Activated CD4-positive, alpha-beta T cell treated with anti-CD3 and anti-CD28 coated beads, Interleukin-2, amount 10 ng/mL, durations not matched to agents 24 days and 14 days (primary cell): ENCODE measurements at regions of chr7 and their contacts with region 1.

Region 1: GRCh38 chr7:88746158-88746557 is 13.3 kb upstream of the ZNF804B start:
- DNase-seq: no peak
- H3K4me3 Mint-ChIP-seq: no peak overlapping the region
- H3K27ac Mint-ChIP-seq: no peak overlapping the region
- H3K4me1 Mint-ChIP-seq: no peaks in the 10 kb centered on the region
- H3K27me3 Mint-ChIP-seq: no peaks in the 10 kb centered on the region

Region 2: DNA sequence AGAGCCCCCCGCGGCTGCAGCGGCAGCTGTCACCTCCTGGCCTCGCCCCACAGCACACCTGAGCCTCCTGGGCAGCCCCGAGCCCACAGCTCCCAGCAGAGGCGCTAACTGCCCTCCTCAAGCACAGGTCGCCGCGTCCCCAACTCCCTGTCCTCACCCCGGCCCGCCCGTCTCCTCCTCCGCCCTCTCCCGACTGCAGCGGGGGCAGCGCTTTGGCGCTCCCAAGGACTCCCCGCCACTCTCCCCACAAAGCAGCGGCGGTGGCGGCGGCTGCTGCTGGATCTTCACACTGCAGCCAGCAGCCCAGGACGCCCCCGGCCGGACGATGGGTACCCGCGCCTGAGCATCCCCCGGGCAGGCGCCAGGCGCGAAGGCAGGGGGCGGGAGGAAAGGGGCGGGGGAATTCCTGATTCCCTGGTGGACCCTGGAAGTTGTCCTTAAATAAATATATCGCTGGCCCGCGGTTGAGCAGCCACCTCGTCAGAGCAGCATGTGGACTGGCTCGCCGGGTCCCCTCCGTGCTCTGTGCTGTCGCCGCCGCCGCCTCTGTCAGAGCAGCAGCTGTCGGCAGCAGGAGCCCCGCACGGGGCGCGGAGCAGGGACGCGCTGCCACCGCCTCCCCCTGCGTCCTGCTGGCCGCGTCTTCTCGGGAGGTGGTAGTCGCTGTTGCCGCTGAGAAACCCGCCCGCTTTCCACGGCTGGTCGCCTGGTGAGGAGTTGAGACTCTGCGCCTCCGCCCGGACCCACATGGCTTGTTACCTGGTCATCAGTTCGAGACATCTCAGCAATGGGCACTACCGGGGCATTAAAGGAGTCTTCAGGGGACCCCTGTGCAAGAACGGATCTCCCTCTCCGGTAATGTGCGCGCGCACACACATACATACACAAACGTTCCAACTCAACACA is 13.3 kb after region 1 on chr7 and contains the start of gene ZNF804B:
- intact Hi-C with region 1: loop called (anchors 2 kb)
- DNase-seq: no peak
- H3K4me3 Mint-ChIP-seq: peak within 1 kb of the TSS; percentile 7
- H3K27ac Mint-ChIP-seq: no peak within 1 kb of the TSS
- H3K4me1 Mint-ChIP-seq: peaks cover 2% of the 10 kb centered on the region
- H3K27me3 Mint-ChIP-seq: peaks cover 43% of the 10 kb centered on the region
- total RNA-seq, gene ZNF804B: not detected in 2 replicates